Activated B cell treated with CpG ODN at 0.5 μM for 24 hours (primary cell): ENCODE measurements at regions of chr6 and their contacts with region 1.

Region 1: DNA sequence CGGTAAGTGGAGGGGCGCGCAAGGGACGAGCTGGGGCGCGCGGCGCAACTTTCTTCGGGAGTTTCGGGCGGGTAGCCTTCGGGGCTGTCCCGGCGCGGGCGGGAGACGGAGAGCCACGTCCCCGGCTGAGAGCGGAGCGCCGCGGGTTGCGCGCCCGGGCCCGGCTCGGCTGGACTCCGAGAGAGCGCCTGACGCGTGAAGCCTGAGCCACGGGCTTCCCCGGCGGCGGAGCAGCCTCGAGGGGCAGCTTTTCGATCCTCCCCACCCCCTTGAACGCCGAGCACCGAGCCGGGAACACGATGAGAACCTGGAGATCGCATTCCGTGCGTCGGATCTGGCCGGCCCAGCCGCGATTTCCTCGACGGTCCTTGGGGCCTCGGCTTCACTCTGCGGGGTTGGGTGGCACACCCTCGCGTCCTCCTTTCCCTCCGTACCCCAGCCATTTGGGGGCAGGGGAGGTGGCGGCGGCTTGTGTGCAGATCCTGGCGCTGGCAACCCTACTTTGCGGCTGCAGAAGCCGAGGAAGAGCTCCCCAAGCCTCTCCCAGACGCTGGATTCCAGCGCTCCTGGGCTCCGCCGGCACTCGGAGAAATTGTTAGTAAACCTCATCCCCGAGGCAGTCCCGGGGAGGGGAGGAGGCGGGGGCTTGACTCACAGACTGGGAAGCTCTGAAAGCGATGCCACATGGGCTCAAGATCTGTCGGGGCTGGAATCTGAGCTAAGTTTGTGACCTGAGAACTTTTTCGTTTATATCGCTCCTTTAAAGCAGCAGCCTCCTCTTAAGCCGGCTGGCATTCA is 572 bp downstream of the DSE start:
- DNase-seq: peak; percentile 48
- ATAC-seq: peak; percentile 49
- H3K4me3 Mint-ChIP-seq: peak overlapping the region; percentile 90
- H3K27ac Mint-ChIP-seq: peak overlapping the region; percentile 69
- H3K4me1 Mint-ChIP-seq: peaks cover 26% of the 10 kb centered on the region
- H3K27me3 Mint-ChIP-seq: peaks cover 2% of the 10 kb centered on the region
- CTCF ChIP-seq: no peak

Region 2: DNA sequence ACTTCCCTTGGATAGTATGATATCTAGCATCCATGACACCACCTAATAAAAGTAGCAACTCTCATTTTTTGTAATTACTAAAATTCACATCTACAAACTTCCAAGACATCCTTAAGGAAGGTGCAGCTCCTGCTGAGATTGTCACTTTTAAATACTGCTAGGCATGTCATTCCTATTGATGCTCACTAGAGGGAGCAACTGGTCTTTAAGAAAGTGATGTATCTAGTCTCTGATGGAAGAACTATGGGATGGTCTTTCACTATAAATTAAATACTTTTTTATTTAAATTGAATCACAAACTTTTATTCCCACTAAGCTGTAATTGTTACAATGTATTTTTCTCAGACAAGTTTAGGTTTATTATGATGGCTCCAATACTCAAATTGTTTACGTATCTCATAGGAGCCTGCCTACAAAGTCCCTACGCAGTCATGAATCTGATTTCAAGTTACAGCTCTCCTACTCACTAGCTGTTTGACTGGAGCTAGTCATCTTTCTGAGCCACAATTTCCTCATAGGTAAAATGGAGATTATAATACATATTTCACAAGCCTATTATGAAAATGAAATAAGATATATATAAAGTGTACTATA is 83.5 kb before region 1 on chr6:
- CTCF ChIA-PET with region 1: interaction called, 11 read pairs
- POLR2A ChIA-PET with region 1: interaction called, 3 read pairs
- intact Hi-C with region 1: loop called (anchors 2 kb)
- DNase-seq: no peak
- ATAC-seq: peak; percentile 88
- H3K4me3 Mint-ChIP-seq: no peak overlapping the region
- H3K27ac Mint-ChIP-seq: no peak overlapping the region
- H3K4me1 Mint-ChIP-seq: peaks cover 5% of the 10 kb centered on the region
- H3K27me3 Mint-ChIP-seq: no peaks in the 10 kb centered on the region
- CTCF ChIP-seq: peak; percentile 98

Region 3: GRCh38 chr6:116338943-116339342 is 32.4 kb before region 1 on chr6:
- CTCF ChIA-PET with region 1: no interaction called
- POLR2A ChIA-PET with region 1: no interaction called
- intact Hi-C with region 1: no loop called
- DNase-seq: no peak
- ATAC-seq: no peak
- H3K4me3 Mint-ChIP-seq: no peak overlapping the region
- H3K27ac Mint-ChIP-seq: no peak overlapping the region
- H3K4me1 Mint-ChIP-seq: peaks cover 3% of the 10 kb centered on the region
- H3K27me3 Mint-ChIP-seq: no peaks in the 10 kb centered on the region
- CTCF ChIP-seq: no peak

Region 4: DNA sequence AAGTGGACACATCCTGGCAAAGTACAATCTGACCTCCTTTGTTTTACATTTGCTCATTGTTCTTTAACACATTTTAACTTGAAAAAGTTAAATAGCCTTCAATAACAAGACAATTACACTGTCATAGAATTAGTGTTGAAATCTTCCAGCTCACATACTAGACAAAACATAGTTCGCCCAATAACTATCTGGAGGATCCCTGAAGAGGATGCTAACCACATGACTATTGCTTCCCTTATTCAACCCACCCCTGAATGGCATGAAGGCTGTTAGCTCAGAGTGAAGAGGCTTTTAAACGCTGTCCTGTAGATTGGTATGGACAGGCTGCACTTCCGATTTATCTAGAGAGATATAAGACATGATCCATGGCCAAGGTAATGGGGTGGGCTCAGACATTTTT is 15.5 kb before region 1 on chr6:
- CTCF ChIA-PET with region 1: no interaction called
- POLR2A ChIA-PET with region 1: interaction called, 10 read pairs
- intact Hi-C with region 1: no loop called
- DNase-seq: no peak
- ATAC-seq: no peak
- H3K4me3 Mint-ChIP-seq: no peak overlapping the region
- H3K27ac Mint-ChIP-seq: no peak overlapping the region
- H3K4me1 Mint-ChIP-seq: no peaks in the 10 kb centered on the region
- H3K27me3 Mint-ChIP-seq: no peaks in the 10 kb centered on the region
- CTCF ChIP-seq: no peak

Region 5: DNA sequence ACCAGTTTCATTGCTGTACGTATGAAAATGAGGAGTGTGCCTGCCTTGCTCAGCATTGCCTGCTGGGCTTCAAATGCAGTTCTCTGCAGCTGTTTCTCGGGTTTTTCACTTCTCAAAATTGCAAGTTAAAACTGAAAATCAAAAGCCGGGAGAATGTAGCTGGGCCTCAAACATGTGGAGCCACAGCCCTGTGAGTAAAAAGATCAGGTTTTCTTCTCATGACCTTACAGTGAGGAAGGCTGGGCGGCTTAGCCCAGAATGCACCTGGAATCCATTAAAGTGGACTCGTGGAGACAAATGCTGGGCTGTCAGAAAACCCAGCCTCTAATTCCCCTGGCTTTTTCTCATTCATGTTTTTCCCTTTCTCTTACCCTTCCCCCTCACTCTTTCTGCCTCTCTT is 33.8 kb after region 1 on chr6:
- CTCF ChIA-PET with region 1: no interaction called
- POLR2A ChIA-PET with region 1: interaction called, 13 read pairs
- intact Hi-C with region 1: loop called (anchors 1 kb)
- DNase-seq: no peak
- ATAC-seq: peak; percentile 56
- H3K4me3 Mint-ChIP-seq: peak overlapping the region; percentile 67
- H3K27ac Mint-ChIP-seq: peak overlapping the region; percentile 92
- H3K4me1 Mint-ChIP-seq: peaks cover 59% of the 10 kb centered on the region
- H3K27me3 Mint-ChIP-seq: no peaks in the 10 kb centered on the region
- CTCF ChIP-seq: no peak

Region 6: GRCh38 chr6:116476002-116476678 is 104.8 kb after region 1 on chr6:
- CTCF ChIA-PET with region 1: no interaction called
- POLR2A ChIA-PET with region 1: no interaction called
- intact Hi-C with region 1: loop called (anchors 1 kb)
- DNase-seq: no peak
- ATAC-seq: peak; percentile 97
- H3K4me3 Mint-ChIP-seq: peak overlapping the region; percentile 70
- H3K27ac Mint-ChIP-seq: peak overlapping the region; percentile 93
- H3K4me1 Mint-ChIP-seq: peaks cover 34% of the 10 kb centered on the region
- H3K27me3 Mint-ChIP-seq: no peaks in the 10 kb centered on the region
- CTCF ChIP-seq: no peak